HEK293T (cell line): ENCODE measurements at regions of chr7 and their contacts with region 1.

Region 1: DNA sequence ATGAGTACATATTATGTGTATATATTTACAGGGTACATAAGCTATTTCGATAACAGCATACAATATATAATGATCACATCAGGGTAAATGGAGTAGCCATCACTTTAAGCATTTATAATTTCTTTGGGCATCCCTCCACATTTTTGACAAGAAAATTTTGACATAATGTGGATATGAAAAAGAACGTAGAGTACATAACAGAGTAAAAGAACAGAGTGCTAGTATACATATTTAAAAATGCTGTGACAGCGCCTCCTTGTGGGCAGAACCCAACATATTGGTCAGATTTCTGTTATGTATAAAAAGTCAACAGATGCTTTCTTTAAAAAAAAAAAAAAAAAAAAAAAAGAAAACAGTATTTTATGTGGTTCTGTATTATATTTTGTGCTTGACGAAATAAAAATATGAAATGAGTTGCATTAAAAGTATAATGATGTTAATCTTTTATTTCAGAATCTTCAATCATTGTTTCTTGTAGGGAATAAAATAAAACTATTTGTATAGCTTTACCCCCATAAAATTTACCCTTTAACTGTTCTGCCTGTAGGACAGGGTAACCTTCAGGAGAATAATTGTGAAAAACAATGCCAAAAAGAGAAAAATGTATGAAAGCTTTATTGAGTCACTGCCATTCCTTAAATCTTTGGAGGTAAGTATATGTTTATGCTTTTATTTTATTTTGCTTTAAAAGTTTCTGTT is 18.3 kb upstream of the HBP1 start:
- DNase-seq: peak; percentile 17

Region 2: DNA sequence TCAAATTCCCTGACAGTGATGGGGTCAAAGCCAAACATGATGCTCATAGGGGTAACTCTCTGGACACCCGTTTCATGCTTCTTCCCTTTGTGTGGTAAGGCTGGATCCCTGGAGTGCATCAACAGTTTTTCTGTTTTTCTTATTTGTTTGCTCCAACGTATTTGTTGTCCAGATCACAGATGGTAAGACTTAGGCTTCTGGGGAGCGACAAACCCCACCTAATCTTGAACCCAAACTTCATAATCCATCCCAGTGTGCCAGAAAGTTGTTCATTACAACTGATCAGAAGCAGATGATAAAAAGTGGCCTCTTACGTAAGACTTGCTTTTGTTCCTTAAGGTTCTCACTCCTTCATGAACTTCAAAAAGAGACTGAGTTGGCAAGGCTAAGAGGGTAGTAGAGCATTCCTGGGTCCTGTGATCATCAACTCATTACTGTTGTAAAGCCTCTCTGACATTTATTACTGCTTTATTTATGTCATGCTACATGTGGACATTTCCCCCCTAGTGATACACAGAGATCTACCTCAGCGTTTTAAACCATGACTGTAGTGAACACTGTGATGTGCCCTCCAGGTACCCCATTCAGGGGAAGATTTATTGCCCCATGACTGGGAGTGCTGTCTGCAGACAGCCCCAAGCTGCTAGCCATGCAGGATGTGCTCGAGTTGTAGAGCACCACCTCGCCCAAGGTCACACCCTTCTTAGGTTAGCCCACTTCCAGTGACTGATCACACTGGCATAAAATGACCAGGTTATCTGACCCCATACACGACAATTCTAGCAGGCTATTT is 615.1 kb before region 1 on chr7:
- CTCF ChIA-PET with region 1: no interaction called
- POLR2A ChIA-PET with region 1: no interaction called
- DNase-seq: no peak

Region 3: GRCh38 chr7:106947244-106947728 is 203.2 kb before region 1 on chr7:
- CTCF ChIA-PET with region 1: interaction called, 29 read pairs
- POLR2A ChIA-PET with region 1: no interaction called
- DNase-seq: peak; percentile 64